OCI-LY7 (cell line): ENCODE measurements at regions of chr15 and their contacts with region 1.

Region 1: DNA sequence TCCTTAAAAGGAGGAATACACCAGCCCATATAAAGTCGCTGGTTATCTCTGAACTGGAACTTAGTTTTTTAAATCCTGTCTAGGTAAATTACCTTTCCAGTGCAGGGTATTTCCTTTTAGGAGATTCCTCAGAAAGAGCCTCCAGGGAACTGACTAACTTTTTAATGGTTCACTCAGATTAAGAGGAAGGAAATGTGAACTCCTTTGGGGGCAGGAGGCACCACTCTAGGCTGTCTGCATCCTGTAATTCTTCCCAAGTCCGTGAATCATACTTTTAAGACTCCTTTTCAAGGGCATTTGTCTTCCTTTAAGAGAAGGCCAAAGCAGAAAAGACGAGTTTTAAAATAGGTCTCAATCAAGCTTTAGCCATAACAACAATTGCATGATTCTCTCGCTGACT is 871.2 kb upstream of the NR2F2 start:
- DNase-seq: no peak
- H3K4me3 ChIP-seq: no peak overlapping the region
- H3K27ac ChIP-seq: no peak overlapping the region
- H3K4me1 ChIP-seq: no peaks in the 10 kb centered on the region
- CTCF ChIP-seq: no peak

Region 2: DNA sequence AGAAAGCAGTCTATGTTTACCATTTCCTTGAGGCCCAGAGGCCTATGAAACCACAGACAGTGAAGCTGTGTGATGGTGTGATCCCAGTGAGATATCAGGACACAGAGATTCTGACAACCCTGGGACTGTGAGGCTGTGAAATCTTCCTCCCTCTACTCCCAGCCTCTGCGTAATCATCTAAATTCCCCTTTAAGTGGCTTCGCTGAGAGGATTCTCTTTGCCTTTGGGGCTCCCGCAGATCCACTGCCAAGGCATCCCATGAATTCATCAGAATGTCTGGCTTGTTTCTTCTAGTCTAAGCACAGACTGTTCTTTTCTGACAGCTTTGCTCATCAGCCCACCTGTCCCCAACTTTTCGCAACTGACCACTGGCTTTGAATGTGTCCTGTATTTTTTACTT is 29.9 kb before region 1 on chr15:
- CTCF ChIA-PET with region 1: no interaction called
- POLR2A ChIA-PET with region 1: interaction called, 11 read pairs
- intact Hi-C with region 1: no loop called
- DNase-seq: no peak
- H3K4me3 ChIP-seq: no peak overlapping the region
- H3K27ac ChIP-seq: no peak overlapping the region
- H3K4me1 ChIP-seq: no peaks in the 10 kb centered on the region
- CTCF ChIP-seq: no peak